Posterior cingulate gyrus (tissue), 11 donors: ENCODE measurements at regions of chr6 and their contacts with region 1.

Region 1: GRCh38 chr6:43013843-43014433 is at the starts of genes KLHDC3 and MEA1:
- DNase-seq: peak; percentile 99 to 100 (median 100)

Region 2: DNA sequence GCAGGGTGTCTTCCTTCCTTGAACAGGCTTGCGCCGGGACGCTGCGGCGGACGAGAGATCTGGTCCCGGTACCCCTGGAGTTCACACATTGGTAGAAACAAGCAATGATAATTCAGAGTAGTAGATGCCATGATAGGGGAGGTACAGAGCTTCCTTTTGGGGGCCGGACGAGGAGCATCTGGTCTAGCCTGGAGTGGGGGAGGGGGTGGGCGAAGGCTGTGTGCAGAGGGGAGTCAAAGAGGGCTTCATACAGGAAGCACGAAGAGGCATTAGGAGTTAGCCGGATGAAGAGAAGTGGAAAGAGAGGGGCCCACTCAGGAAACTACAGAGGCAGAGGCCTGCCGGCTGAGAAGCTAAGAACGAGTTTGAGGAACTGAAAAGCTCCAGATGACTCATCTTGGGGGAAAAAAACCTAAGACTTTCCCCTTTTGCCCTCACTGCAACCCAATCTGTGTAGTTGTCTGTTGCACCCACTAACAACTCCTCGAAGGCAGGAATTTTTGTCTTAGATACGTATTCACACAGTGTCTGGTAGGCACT is 84.0 kb before region 1 on chr6:
- intact Hi-C with region 1: loop called (anchors 5 kb)
- DNase-seq: no peak

Region 3: DNA sequence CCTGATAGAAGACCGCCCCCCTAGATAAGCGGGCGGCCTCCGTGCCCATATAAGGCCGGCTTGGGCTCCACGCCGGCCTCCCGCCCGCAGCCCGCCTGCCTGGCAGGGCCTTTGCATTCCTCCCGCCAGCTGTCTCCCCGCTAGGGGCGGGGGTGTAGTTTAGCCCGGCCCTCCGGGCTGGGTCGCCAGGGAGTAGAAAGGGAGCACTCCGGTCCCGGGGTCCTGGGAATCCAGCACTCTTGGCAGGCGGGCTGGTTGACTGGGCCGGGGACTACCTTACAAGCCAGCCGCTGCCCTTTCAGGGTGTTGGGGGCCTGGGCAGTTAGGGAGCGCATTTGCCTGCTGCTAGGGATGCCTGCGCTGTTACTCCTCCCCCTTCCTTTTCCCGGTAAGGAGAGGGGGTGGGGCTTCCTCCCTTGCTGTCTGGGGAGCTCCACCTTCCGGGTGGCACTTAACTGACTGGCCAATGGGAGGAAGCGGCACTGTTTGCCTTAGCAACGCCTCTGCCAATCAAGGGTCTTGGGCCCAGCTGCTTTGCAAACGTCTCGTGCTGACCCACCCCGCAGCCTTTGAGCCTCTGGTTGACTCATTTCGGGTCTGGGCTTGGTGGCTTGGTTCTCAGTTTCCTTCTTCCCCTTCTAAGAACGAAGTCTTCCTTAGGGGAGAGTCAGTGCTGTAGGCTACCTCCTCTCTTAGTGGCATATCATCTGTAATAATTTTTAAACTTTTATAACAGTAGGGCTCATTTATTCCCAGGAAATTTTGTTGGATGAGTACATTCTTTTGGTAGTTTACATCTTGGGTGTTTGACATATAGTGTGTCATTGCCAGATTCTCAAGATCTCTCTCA is 160.6 kb after region 1 on chr6:
- intact Hi-C with region 1: loop called (anchors 10 kb)
- DNase-seq: peak; percentile 90 to 100 (median 96)